ENCODE measurements at regions of chr3 and their contacts with region 1.

Region 1: GRCh38 chr3:168040607-168041208 is 55.0 kb downstream of the GOLIM4 start:
- DNase-seq: no peak
- ATAC-seq: peak; percentile 39
- H3K4me3 Mint-ChIP-seq: no peak overlapping the region
- H3K27ac Mint-ChIP-seq: no peak overlapping the region
- H3K4me1 Mint-ChIP-seq: no peaks in the 10 kb centered on the region
- H3K27me3 Mint-ChIP-seq: no peaks in the 10 kb centered on the region

Region 2: DNA sequence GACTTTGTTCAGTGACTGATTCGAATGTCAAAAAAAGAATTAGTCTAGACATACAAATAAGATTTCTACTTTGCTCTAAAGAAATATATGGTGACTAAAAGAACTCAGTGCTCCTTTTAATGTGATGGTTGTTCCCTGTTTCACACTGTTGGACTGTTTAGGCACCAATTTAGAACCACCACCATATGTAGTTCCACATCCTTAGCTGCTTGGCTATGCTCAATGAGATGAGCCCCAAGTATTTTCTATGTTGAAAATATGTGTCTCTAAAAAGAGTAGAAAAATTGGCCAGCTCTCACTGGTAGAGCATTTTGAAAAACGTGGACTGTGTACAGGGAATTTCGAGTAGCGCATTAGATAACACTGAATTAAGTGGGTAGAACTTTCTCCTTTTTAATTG is 112.3 kb before region 1 on chr3:
- CTCF ChIA-PET with region 1: interaction called, 10 read pairs
- DNase-seq: no peak
- ATAC-seq: no peak
- H3K4me3 Mint-ChIP-seq: no peak overlapping the region
- H3K27ac Mint-ChIP-seq: no peak overlapping the region
- H3K4me1 Mint-ChIP-seq: no peaks in the 10 kb centered on the region
- H3K27me3 Mint-ChIP-seq: peaks cover 3% of the 10 kb centered on the region

Region 3: DNA sequence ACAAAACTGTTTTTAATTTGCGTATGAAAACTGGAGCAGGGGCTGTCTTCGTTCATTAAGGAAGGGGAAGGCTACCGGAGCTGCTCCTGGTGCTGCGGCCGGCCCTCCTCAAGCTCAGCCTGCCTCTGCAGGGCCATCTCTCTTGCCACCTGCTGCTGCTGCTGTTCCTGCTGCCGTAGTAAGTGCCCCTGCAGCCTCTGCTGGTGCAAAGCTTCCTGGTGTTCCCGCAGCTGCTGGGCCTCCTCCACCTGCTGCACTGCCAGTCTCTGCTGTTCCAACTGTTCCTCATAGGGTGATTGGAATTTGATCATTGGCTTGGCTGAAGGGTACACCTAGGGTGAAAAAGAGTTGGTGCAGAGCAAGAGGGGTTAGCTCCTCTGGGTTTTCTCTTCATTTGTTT is 11.0 kb before region 1 on chr3:
- CTCF ChIA-PET with region 1: interaction called, 14 read pairs
- DNase-seq: no peak
- ATAC-seq: no peak
- H3K4me3 Mint-ChIP-seq: no peak overlapping the region
- H3K27ac Mint-ChIP-seq: no peak overlapping the region
- H3K4me1 Mint-ChIP-seq: peaks cover 32% of the 10 kb centered on the region
- H3K27me3 Mint-ChIP-seq: no peaks in the 10 kb centered on the region

Region 4: GRCh38 chr3:168095611-168096209 is 55.0 kb after region 1 on chr3 and contains the start of gene GOLIM4:
- CTCF ChIA-PET with region 1: no interaction called
- DNase-seq: peak; percentile 81
- ATAC-seq: peak; percentile 80
- H3K4me3 Mint-ChIP-seq: peak within 1 kb of the TSS; percentile 76
- H3K27ac Mint-ChIP-seq: peak within 1 kb of the TSS; percentile 80
- H3K4me1 Mint-ChIP-seq: peaks cover 21% of the 10 kb centered on the region
- H3K27me3 Mint-ChIP-seq: peaks cover 44% of the 10 kb centered on the region
- total RNA-seq, gene GOLIM4: 6.4 to 19.2 TPM